HepG2 (cell line): ENCODE measurements at regions of chr1 and their contacts with region 1.

Region 1: GRCh38 chr1:35451125-35451528 is 106.1 kb downstream of the KIAA0319L start:
- DNase-seq: peak; percentile 55
- ATAC-seq: peak; percentile 98
- H3K4me3 ChIP-seq: no peak overlapping the region
- H3K27ac ChIP-seq: no peak overlapping the region
- H3K4me1 ChIP-seq: peaks cover 29% of the 10 kb centered on the region
- H3K27me3 ChIP-seq: no peaks in the 10 kb centered on the region
- CTCF ChIP-seq: peak; percentile 86
- EP300 ChIP-seq: no peak
- POLR2A ChIP-seq: no peak
- RAD21 ChIP-seq: peak; percentile 68

Region 2: GRCh38 chr1:35345439-35345981 is 105.6 kb before region 1 on chr1:
- CTCF ChIA-PET with region 1: no interaction called
- POLR2A ChIA-PET with region 1: no interaction called
- in situ Hi-C with region 1: no loop called
- intact Hi-C with region 1: no loop called
- DNase-seq: peak; percentile 75
- ATAC-seq: peak; percentile 95
- H3K4me3 ChIP-seq: peak overlapping the region; percentile 53 to 70 (median 60)
- H3K27ac ChIP-seq: peak overlapping the region; percentile 81
- H3K4me1 ChIP-seq: peaks cover 23% of the 10 kb centered on the region
- H3K27me3 ChIP-seq: no peaks in the 10 kb centered on the region
- CTCF ChIP-seq: peak; percentile 61
- EP300 ChIP-seq: peak; percentile 31 to 35; a peak in 2 of 4 replicates
- POLR2A ChIP-seq: no peak
- RAD21 ChIP-seq: no peak

Region 3: GRCh38 chr1:35544978-35545377 is 93.9 kb after region 1 on chr1:
- CTCF ChIA-PET with region 1: interaction called, 29 read pairs
- POLR2A ChIA-PET with region 1: no interaction called
- in situ Hi-C with region 1: loop called (anchors 10 kb)
- intact Hi-C with region 1: loop called (anchors 1 kb)
- DNase-seq: peak; percentile 85
- ATAC-seq: peak; percentile 97
- H3K4me3 ChIP-seq: no peak overlapping the region
- H3K27ac ChIP-seq: no peak overlapping the region
- H3K4me1 ChIP-seq: peaks cover 16% of the 10 kb centered on the region
- H3K27me3 ChIP-seq: no peaks in the 10 kb centered on the region
- CTCF ChIP-seq: peak; percentile 87
- EP300 ChIP-seq: no peak
- POLR2A ChIP-seq: no peak
- RAD21 ChIP-seq: peak; percentile 70

Region 4: GRCh38 chr1:35726450-35727433 is 275.6 kb after region 1 on chr1:
- CTCF ChIA-PET with region 1: no interaction called
- POLR2A ChIA-PET with region 1: no interaction called
- in situ Hi-C with region 1: loop called (anchors 25 kb)
- intact Hi-C with region 1: no loop called
- DNase-seq: peak; percentile 53
- ATAC-seq: peak; percentile 97
- H3K4me3 ChIP-seq: no peak overlapping the region
- H3K27ac ChIP-seq: no peak overlapping the region
- H3K4me1 ChIP-seq: no peaks in the 10 kb centered on the region
- H3K27me3 ChIP-seq: no peaks in the 10 kb centered on the region
- CTCF ChIP-seq: peak; percentile 91
- EP300 ChIP-seq: no peak
- POLR2A ChIP-seq: no peak
- RAD21 ChIP-seq: peak; percentile 79

Region 5: GRCh38 chr1:35769759-35770446 is 318.8 kb after region 1 on chr1 and contains the start of gene CLSPN:
- CTCF ChIA-PET with region 1: no interaction called
- POLR2A ChIA-PET with region 1: no interaction called
- in situ Hi-C with region 1: no loop called
- intact Hi-C with region 1: loop called (anchors 1 kb)
- DNase-seq: peak; percentile 94
- ATAC-seq: peak; percentile 96
- H3K4me3 ChIP-seq: peak within 1 kb of the TSS; percentile 86 to 99 (median 88)
- H3K27ac ChIP-seq: peak within 1 kb of the TSS; percentile 86
- H3K4me1 ChIP-seq: peaks cover 26% of the 10 kb centered on the region; the same call in 1 of the 2 replicates
- H3K27me3 ChIP-seq: no peaks in the 10 kb centered on the region
- CTCF ChIP-seq: no peak
- EP300 ChIP-seq: peak in 1 of 2 experiments; percentile 20; a peak in 1 of 4 replicates
- POLR2A ChIP-seq: peak; percentile 73 to 94
- RAD21 ChIP-seq: no peak
- total RNA-seq, gene CLSPN: 32.5 and 51.7 TPM in 2 replicates